ENCODE measurements at regions of chr2 and their contacts with region 1.

Region 1: GRCh38 chr2:109545828-109546713 is 67.7 kb downstream of the SEPTIN10 start:
- DNase-seq: peak; percentile 79
- H3K4me3 ChIP-seq: no peak overlapping the region
- H3K27ac ChIP-seq: no peak overlapping the region
- H3K4me1 ChIP-seq: no peaks in the 10 kb centered on the region
- H3K27me3 ChIP-seq: no peaks in the 10 kb centered on the region
- CTCF ChIP-seq: peak; percentile 68 to 82 (median 75)
- POLR2A ChIP-seq: no peak

Region 2: DNA sequence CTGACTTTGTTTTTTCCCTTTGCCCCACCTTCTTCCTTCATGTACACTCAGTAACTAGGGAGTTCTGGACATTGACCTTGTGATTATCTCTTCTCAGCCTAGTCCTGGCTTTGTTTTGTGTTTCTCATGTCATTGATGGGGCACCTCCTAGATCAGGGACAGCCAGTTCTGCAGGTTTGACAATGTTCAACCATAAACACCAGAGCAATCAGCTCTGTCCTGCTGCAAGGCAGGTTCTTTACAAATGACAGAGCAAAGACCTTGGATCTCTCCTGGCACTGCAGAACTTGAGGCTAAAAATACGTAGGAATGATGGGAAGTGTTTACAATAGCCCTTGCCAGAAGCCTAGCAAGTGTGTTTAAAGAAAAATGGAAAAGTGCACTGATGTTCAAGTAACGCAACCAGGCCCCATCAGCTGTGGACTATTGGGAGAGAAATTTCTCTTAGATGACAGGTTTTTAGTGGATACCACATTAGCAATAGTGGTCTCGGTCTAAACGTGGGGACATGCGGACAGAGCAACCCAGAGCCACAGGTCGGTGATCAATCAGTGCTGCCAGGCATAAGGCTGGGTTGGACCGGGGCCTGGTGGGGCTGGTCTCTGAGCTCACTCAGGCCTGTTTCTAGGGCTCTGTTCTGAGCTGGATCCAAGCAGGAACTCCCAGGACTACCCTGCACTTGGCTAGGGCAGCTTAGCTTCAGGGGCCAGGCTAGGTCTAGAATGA is 144.9 kb after region 1 on chr2:
- intact Hi-C with region 1: no loop called
- DNase-seq: peak; percentile 64
- H3K4me3 ChIP-seq: no peak overlapping the region
- H3K27ac ChIP-seq: peak overlapping the region; percentile 81 to 84
- H3K4me1 ChIP-seq: peaks cover 41% of the 10 kb centered on the region
- H3K27me3 ChIP-seq: no peaks in the 10 kb centered on the region
- CTCF ChIP-seq: no peak
- POLR2A ChIP-seq: no peak

Region 3: GRCh38 chr2:109702618-109702985 is 156.5 kb after region 1 on chr2:
- intact Hi-C with region 1: no loop called
- DNase-seq: no peak
- H3K4me3 ChIP-seq: no peak overlapping the region
- H3K27ac ChIP-seq: no peak overlapping the region
- H3K4me1 ChIP-seq: peaks cover 18% of the 10 kb centered on the region
- H3K27me3 ChIP-seq: no peaks in the 10 kb centered on the region
- CTCF ChIP-seq: no peak
- POLR2A ChIP-seq: no peak

Region 4: DNA sequence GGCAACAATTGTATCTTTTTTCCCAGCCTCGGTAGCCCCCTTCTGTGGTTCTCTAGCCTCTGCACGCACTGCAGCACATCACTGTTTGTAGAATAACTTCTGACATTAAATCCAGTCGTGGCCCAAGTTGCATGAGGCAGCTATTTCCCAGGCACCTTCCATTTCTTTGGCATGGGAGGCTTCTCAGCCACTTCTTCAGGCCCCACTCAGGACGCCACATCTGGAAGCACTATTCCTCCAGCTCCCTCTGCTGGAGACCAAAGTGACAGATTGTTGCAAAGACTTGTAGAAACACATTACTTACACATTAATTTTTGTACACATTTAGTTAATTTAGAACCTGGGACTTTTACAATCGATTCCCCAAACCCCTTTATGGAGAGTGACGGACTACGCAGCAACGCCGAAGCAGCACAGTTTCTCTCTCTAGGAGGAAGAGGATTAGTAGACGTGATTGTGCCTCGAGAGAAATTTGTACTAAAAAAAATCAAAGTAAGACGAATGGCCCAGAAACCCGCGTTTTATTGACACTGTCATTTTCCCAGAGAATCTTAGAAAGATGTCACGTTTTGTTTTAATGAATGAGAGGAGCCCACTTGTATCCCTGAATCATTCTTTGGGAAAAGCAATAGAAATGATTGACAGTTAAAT is 190.2 kb after region 1 on chr2:
- intact Hi-C with region 1: loop called (anchors 5 kb)
- DNase-seq: peak; percentile 79
- H3K4me3 ChIP-seq: no peak overlapping the region
- H3K27ac ChIP-seq: no peak overlapping the region
- H3K4me1 ChIP-seq: no peaks in the 10 kb centered on the region
- H3K27me3 ChIP-seq: no peaks in the 10 kb centered on the region
- CTCF ChIP-seq: peak; percentile 63 to 64 (median 64)
- POLR2A ChIP-seq: no peak

Measured in testis (tissue), 5 donors.